ENCODE measurements at regions of chr2 and their contacts with region 1.

Region 1: GRCh38 chr2:161160226-161161069 is at the start of gene TANK:
- DNase-seq: peak; percentile 94
- H3K4me3 Mint-ChIP-seq: peak within 1 kb of the TSS; percentile 96
- H3K27ac Mint-ChIP-seq: peak within 1 kb of the TSS; percentile 99
- H3K4me1 Mint-ChIP-seq: peaks cover 48% of the 10 kb centered on the region
- H3K27me3 Mint-ChIP-seq: no peaks in the 10 kb centered on the region
- total RNA-seq, gene TANK: 48.6 to 50.4 TPM

Region 2: DNA sequence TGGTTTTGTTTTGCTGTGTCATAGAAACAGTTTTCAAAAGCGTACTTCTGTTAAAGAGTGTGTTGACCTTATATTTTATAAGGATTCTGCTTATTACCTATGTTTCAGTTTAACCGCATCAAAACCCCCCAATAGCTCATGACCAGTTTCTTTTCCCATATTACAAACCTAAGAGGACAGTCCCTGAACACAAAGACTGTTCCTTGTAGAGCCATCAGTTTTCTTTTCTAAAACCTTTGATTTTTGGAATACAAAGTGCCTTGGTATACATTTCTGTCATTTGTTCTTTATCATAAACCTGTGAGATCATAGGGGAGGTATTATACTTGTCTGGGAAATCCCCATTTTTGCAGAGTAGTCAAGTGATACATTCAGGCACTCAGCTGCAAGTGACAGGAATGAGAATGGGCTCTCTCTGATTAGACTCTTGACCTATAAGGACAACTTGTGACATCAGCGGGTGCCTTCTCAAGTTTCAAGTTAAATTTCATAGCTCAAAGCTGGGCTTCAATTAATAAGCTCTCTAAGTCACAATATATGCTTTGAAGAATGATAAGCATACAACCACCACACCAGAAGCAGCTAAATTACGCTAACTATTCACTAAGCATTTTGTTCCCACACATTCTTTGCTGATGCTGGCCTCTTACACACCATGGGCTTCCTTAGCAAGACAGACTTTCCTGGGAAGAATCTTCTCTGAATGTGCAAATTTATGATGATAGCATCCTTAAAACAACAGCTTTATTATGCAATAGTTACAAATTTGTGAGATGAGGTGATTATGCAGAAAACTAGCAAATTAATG is 1265.0 kb before region 1 on chr2:
- CTCF ChIA-PET with region 1: no interaction called
- intact Hi-C with region 1: loop called (anchors 10 kb)
- DNase-seq: peak; percentile 66
- H3K4me3 Mint-ChIP-seq: no peak overlapping the region
- H3K27ac Mint-ChIP-seq: peak overlapping the region; percentile 84
- H3K4me1 Mint-ChIP-seq: peaks cover 91% of the 10 kb centered on the region
- H3K27me3 Mint-ChIP-seq: no peaks in the 10 kb centered on the region

Region 3: GRCh38 chr2:161090411-161090810 is 70.0 kb before region 1 on chr2:
- CTCF ChIA-PET with region 1: interaction called, 4 read pairs
- intact Hi-C with region 1: loop called (anchors 5 kb)
- DNase-seq: peak; percentile 74
- H3K4me3 Mint-ChIP-seq: no peak overlapping the region
- H3K27ac Mint-ChIP-seq: peak overlapping the region; percentile 68
- H3K4me1 Mint-ChIP-seq: peaks cover 33% of the 10 kb centered on the region
- H3K27me3 Mint-ChIP-seq: no peaks in the 10 kb centered on the region

Region 4: DNA sequence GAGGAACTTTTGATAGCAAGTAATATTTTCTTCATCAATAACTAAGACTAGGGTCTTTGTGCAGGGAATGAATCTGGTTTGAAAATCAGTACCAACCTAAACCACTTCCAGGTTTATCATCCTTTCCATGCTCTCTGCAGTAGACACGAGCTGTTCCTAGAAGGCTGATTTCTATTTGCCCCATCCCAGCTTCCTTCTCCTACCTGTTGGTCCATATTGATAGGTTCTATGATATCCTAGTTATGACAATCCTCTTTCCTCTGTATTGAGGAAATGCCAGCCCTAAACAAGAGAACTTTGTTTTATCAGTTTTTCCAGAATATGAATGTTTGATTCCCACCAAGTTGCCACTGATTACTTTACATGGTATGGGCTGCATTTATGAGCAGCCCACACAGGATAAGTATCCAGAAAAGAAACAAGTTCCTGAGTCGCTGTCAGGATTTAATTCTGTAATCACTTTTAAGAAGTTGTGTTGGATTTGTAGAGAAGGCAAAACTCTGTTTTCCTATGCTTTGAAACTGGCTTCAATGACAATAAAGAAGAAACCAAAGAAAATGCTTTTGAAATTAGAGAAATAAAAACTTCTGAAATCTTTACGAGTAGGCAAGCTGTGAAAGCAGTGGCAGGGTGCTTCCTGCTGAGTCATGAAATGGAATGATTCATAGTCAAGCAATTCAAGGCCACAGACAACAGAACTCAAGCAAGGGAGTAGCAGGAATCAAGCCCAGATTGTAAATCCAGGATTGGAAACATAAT is 37.5 kb before region 1 on chr2:
- CTCF ChIA-PET with region 1: no interaction called
- intact Hi-C with region 1: loop called (anchors 1 kb)
- DNase-seq: peak; percentile 70
- H3K4me3 Mint-ChIP-seq: no peak overlapping the region
- H3K27ac Mint-ChIP-seq: peak overlapping the region; percentile 3
- H3K4me1 Mint-ChIP-seq: peaks cover 20% of the 10 kb centered on the region
- H3K27me3 Mint-ChIP-seq: peaks cover 3% of the 10 kb centered on the region

Region 5: DNA sequence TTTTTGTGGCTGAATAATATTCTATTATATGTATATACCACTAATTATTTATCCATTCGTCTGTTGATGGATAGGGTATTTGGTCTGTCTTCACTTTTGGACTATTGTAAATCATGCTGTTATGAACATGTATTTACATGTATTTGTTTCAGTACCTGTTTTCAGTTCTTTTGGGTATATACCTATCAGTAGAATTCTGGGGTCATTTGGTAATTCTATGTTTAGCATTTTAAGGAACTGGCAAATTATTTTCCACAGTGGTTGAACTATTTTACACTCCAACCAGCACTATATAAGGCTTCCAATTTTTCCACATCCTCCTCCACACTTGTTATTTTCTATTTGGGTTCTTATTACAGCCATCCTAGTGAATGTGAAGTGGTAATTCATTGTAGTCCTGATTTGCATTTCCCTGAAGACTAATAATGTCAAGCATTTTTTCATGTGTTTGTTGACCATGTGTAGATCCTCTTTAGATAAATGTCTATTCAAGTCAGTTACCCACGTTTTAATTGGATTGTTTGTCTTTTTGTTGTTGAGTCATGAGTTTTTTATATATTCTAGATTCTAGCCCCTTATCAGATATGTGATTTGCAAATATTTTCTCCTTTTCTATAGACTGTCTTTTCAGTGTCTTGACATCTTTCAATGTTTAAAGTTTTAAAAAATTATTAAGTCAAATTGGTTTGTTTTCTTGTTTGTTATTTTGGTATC is 12.4 kb before region 1 on chr2:
- CTCF ChIA-PET with region 1: interaction called, 3 read pairs
- intact Hi-C with region 1: loop called (anchors 1 kb)
- DNase-seq: no peak
- H3K4me3 Mint-ChIP-seq: no peak overlapping the region
- H3K27ac Mint-ChIP-seq: no peak overlapping the region
- H3K4me1 Mint-ChIP-seq: peaks cover 42% of the 10 kb centered on the region
- H3K27me3 Mint-ChIP-seq: no peaks in the 10 kb centered on the region

Region 6: DNA sequence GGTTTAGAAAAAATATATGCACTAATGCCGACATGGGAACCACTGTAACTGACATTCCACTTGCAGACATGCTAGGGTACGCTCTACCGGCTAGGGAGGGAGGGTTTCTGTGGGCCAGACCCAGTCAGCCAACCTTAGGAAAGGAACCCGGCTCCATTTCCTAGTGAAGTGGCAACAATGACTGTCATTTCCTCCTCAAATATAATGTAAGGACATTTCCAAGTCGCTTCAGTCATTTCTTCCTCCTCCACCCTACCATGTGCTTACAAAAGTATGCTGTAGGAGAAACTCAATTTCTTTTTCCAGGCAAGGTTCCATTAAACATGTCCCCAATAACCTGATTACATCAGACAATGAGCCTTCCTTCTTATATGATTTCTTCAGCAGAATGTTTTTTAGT is 83.5 kb after region 1 on chr2:
- CTCF ChIA-PET with region 1: no interaction called
- intact Hi-C with region 1: loop called (anchors 1 kb)
- DNase-seq: peak; percentile 37
- H3K4me3 Mint-ChIP-seq: peak overlapping the region; percentile 87
- H3K27ac Mint-ChIP-seq: peak overlapping the region; percentile 95
- H3K4me1 Mint-ChIP-seq: peaks cover 50% of the 10 kb centered on the region
- H3K27me3 Mint-ChIP-seq: no peaks in the 10 kb centered on the region

Region 7: DNA sequence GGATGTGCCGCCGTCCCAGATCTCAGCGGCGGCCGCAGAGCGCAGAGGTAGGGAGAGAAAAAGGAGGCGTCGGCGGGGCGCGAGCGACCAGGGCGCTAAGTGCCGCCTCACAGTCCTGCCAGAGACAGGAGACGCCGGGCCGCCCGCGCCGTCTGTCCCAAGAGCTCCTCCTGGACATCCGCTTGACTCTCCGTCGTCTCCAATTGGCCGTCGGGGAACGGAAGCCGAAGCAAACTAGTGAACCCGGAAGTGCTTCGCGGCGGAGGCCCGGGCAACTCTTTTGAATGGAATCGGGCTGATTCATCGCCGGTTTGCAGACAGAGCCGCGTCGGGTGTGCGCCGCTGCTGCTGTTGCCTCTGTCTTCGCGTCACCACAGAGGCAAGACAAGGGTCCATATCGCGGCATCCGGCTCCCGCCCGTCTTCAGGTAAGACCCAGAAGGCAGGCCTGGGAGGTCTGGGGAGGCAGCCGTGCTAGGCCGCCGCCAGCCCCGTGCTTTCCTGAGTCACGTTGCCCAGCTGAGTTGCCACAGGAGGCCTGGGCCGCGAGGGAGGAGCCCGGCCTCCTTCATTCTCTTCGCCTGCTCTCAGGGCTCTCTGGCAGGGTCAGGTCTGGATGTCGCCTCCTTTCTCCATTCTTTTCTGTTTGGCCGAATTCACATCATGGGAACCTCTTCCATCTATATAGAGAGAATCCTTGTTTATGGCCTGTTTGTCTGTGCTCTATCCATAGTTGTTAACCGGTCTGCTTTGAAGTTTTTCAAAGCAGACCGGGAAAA is 147.9 kb after region 1 on chr2 and contains the start of gene PSMD14:
- CTCF ChIA-PET with region 1: no interaction called
- intact Hi-C with region 1: loop called (anchors 1 kb)
- DNase-seq: peak; percentile 96
- H3K4me3 Mint-ChIP-seq: peak within 1 kb of the TSS; percentile 86
- H3K27ac Mint-ChIP-seq: peak within 1 kb of the TSS; percentile 91
- H3K4me1 Mint-ChIP-seq: peaks cover 35% of the 10 kb centered on the region
- H3K27me3 Mint-ChIP-seq: no peaks in the 10 kb centered on the region
- total RNA-seq, gene PSMD14: 76.2 to 79.4 TPM

Measured in activated naive CD4-positive, alpha-beta T cell treated with anti-CD3 and anti-CD28 coated beads for 36 hours (primary cell).